AG04450 (cell line): ENCODE measurements at regions of chr12 and their contacts with region 1.

Region 1: GRCh38 chr12:123457980-123458783 is at the start of gene SNRNP35:
- DNase-seq: peak; percentile 49
- H3K4me3 ChIP-seq: peak within 1 kb of the TSS; percentile 90
- H3K27ac ChIP-seq: peak within 1 kb of the TSS; percentile 99
- H3K27me3 ChIP-seq: no peaks in the 10 kb centered on the region
- CTCF ChIP-seq: no peak; the same call in 1 of the 2 replicates
- polyA plus RNA-seq, gene SNRNP35: 12.1 and 13.0 TPM in 2 replicates

Region 2: GRCh38 chr12:123267991-123268843 is 190.0 kb before region 1 on chr12:
- CTCF ChIA-PET with region 1: interaction called, 12 read pairs
- POLR2A ChIA-PET with region 1: no interaction called
- DNase-seq: no peak
- H3K4me3 ChIP-seq: no peak overlapping the region
- H3K27ac ChIP-seq: peak overlapping the region; percentile 11
- H3K27me3 ChIP-seq: no peaks in the 10 kb centered on the region
- CTCF ChIP-seq: no peak

Region 3: GRCh38 chr12:123471374-123472068 is 13.3 kb after region 1 on chr12:
- CTCF ChIA-PET with region 1: no interaction called
- POLR2A ChIA-PET with region 1: interaction called, 11 read pairs
- DNase-seq: peak; percentile 84
- H3K4me3 ChIP-seq: no peak overlapping the region
- H3K27ac ChIP-seq: peak overlapping the region; percentile 80
- H3K27me3 ChIP-seq: no peaks in the 10 kb centered on the region
- CTCF ChIP-seq: no peak

Region 4: DNA sequence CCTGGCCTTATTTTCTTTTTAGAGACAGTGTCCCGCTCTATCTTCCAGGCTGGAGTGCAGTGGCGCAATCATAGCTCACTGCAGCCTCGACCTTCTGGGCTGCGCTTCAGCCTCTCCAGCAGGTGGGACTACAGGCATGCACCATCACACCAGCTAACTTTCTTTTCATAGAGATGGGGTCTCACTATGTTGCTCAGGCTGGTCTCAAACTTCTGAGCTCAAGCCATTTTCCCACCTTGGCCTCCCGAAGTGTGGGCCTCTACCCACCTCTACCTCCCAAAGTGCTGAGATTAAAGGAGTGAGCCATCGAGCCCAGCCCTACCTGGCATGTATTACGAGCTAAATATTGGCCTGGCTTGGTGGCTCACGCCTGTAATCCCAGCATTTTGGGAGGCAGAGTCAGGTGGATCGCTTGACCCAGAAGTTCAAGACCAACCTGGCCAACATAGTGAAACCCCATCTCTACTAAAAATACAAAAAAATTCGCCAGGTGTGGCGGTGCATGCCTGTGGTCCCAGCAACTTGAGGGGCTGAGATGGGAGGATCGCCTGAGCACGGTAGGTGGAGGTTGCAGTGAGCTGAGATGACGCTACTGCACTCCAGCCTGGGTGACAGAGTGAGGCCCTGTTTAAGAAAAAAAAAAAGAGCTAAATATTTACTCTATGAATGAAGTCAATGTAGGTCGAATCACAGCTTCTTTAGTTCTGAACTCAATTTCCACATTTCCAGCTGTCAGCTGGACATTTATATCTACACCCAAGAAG is 82.9 kb after region 1 on chr12:
- CTCF ChIA-PET with region 1: no interaction called
- POLR2A ChIA-PET with region 1: no interaction called
- DNase-seq: no peak
- H3K4me3 ChIP-seq: no peak overlapping the region
- H3K27ac ChIP-seq: no peak overlapping the region
- H3K27me3 ChIP-seq: no peaks in the 10 kb centered on the region
- CTCF ChIP-seq: no peak

Region 5: GRCh38 chr12:123571343-123571813 is 113.2 kb after region 1 on chr12:
- CTCF ChIA-PET with region 1: interaction called, 10 read pairs
- POLR2A ChIA-PET with region 1: no interaction called
- DNase-seq: peak; percentile 41
- H3K4me3 ChIP-seq: no peak overlapping the region
- H3K27ac ChIP-seq: no peak overlapping the region
- H3K27me3 ChIP-seq: no peaks in the 10 kb centered on the region
- CTCF ChIP-seq: no peak